Gastrocnemius medialis (tissue), 4 donors: ENCODE measurements at regions of chr1 and their contacts with region 1.

Region 1: GRCh38 chr1:87942165-87942564 is 613.5 kb downstream of the LMO4 start:
- DNase-seq: peak; percentile 12 to 63
- ATAC-seq: peak; percentile 67 to 87
- H3K4me3 ChIP-seq: no peak overlapping the region
- H3K27ac ChIP-seq: no peak overlapping the region
- H3K4me1 ChIP-seq: no peaks in the 10 kb centered on the region
- H3K27me3 ChIP-seq: no peaks in the 10 kb centered on the region
- CTCF ChIP-seq: no peak
- POLR2A ChIP-seq: no peak

Region 2: DNA sequence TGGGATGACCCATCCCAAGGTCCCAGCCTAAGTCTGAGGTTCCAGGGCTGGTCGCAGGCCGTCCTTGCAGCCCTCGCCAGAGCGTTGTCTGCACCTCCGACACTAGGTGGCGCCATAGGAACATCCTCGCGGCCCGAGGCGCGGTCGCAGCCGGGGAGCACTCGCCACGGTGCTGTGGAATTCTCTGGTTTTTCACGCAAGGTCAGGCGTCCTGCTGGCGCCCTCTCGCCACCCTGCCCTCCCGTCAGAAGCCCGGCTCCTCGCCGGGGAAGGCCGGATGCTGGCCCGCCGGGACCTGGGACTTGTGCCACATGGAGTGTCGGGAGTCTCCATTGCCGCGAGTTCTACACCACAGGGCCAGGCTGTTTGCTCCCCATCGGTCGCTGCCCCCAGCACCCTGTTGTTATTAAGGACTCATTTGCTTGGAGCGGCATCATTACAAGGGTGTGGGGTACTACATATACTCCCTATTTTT is 810.3 kb before region 1 on chr1:
- in situ Hi-C with region 1: loop called in 1 of 4 experiments (anchors 25 kb)
- intact Hi-C with region 1: no loop called
- DNase-seq: peak; percentile 44 to 54
- ATAC-seq: peak; percentile 73 to 84
- H3K4me3 ChIP-seq: peak overlapping the region; percentile 48 to 75 (median 60)
- H3K27ac ChIP-seq: peak overlapping the region; percentile 37 to 56 (median 48)
- H3K4me1 ChIP-seq: no peaks in the 10 kb centered on the region
- H3K27me3 ChIP-seq: no peaks in the 10 kb centered on the region
- CTCF ChIP-seq: peak; percentile 44 to 91 (median 76)
- POLR2A ChIP-seq: no peak

Region 3: DNA sequence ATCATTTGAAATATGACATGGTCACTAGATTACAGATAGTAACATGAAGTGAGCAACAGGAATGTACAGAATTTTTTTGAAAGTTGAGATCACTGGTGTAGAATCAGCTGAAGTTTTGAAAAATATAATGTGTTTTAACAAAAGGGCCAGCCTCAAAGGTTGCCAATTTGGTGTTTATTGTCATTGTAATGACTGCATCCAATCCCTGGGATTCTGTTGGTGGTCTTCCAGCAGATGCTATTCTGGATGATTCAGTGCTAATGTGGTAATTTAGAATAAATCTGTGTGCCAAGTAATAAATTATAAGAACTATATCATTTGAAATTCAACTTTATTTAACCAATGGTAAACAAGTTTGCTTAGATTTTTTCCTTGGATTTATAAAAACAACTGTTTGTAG is 305.5 kb after region 1 on chr1:
- in situ Hi-C with region 1: no loop called
- intact Hi-C with region 1: no loop called
- DNase-seq: no peak
- ATAC-seq: no peak
- H3K4me3 ChIP-seq: no peak overlapping the region
- H3K27ac ChIP-seq: no peak overlapping the region
- H3K4me1 ChIP-seq: no peaks in the 10 kb centered on the region
- H3K27me3 ChIP-seq: no peaks in the 10 kb centered on the region
- CTCF ChIP-seq: no peak
- POLR2A ChIP-seq: no peak